GM12878 (cell line): ENCODE measurements at regions of chr4 and their contacts with region 1.

Region 1: DNA sequence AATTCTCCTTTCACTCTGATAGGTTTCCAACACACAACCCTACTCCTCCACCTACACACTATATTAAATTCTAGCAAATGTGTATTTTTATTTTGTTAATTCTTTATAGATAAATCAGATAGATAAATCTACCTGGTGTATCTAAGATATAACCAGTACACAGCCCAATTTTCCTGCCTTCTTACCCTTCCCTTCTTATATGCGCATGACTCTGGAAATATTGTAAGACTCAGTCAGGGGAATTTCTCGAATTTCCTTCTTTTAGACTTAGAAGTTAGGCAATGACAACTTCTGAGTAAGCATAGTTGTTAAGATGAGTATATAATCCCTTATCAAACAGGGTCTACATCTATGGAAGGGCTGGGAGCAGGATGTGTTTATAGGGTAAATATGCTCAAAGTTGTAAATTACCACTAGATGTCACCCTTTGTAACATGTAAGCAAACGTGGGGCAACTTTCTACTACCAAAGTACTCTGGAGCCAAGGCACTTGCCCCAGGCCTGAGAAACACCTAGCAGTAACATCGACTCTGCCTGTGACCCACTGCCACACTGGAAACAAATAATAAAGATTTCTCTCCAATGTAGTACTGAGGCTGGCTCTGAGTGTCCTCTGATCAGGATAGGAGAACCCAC is 444.7 kb downstream of the IQCM start:
- DNase-seq: no peak
- ATAC-seq: peak; percentile 92
- H3K4me3 ChIP-seq: no peak overlapping the region
- H3K27ac ChIP-seq: no peak overlapping the region
- H3K4me1 ChIP-seq: no peaks in the 10 kb centered on the region
- H3K27me3 ChIP-seq: no peaks in the 10 kb centered on the region
- CTCF ChIP-seq: peak; percentile 25 to 58 (median 39); a peak in 4 of 6 replicates
- EP300 ChIP-seq: no peak
- POLR2A ChIP-seq: no peak
- RAD21 ChIP-seq: peak; percentile 45

Region 2: GRCh38 chr4:148926276-148927260 is 444.3 kb before region 1 on chr4:
- CTCF ChIA-PET with region 1: no interaction called
- POLR2A ChIA-PET with region 1: no interaction called
- RAD21 ChIA-PET with region 1: no interaction called
- SMC1A ChIA-PET with region 1: no interaction called
- in situ Hi-C with region 1: no loop called
- intact Hi-C with region 1: no loop called
- DNase-seq: no peak
- ATAC-seq: no peak
- H3K4me3 ChIP-seq: no peak overlapping the region
- H3K27ac ChIP-seq: no peak overlapping the region
- H3K4me1 ChIP-seq: no peaks in the 10 kb centered on the region
- H3K27me3 ChIP-seq: no peaks in the 10 kb centered on the region
- CTCF ChIP-seq: no peak
- EP300 ChIP-seq: no peak
- POLR2A ChIP-seq: no peak
- RAD21 ChIP-seq: no peak

Region 3: DNA sequence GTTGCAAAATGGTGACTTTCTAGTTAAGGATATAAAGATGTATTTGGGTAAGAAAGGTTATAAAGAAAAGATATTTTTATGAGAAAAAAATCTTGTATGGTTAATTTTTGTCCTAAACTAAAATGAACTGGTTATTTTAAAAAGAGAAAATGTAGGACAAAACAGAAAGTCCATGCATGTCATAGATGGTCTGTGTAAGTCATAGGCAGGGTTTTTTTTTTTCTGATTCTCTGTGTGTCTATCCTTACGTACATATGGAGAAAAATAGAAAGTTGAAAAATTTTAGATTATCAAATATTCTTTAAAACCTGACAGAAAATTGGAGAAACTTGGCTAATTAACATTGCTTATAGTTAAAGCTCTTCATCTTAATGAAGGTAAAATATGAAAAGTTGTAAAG is 48.7 kb before region 1 on chr4:
- CTCF ChIA-PET with region 1: no interaction called
- POLR2A ChIA-PET with region 1: no interaction called
- RAD21 ChIA-PET with region 1: no interaction called
- SMC1A ChIA-PET with region 1: no interaction called
- in situ Hi-C with region 1: no loop called
- intact Hi-C with region 1: no loop called
- DNase-seq: no peak
- ATAC-seq: no peak
- H3K4me3 ChIP-seq: no peak overlapping the region
- H3K27ac ChIP-seq: no peak overlapping the region
- H3K4me1 ChIP-seq: no peaks in the 10 kb centered on the region
- H3K27me3 ChIP-seq: no peaks in the 10 kb centered on the region
- CTCF ChIP-seq: no peak
- EP300 ChIP-seq: no peak
- POLR2A ChIP-seq: no peak
- RAD21 ChIP-seq: no peak

Region 4: DNA sequence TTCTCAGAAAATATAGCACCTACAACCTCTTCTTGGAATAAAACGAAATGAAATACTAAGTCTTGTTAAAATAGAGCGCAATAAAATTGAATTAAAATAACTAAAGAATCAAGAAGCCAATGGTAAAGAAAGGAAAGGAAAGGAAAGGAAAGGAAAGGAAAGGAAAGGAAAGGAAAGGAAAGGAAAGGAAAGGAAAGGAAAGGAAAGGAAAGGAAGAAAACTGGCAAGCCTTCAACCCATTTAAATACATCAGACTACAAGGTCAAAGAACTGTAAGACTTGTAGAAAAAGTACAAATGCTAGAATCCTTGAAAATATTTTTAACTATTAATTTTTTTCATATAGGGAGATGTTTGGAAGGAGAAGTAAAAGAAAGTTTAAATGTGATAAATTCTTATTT is 72.6 kb after region 1 on chr4:
- CTCF ChIA-PET with region 1: no interaction called
- POLR2A ChIA-PET with region 1: no interaction called
- RAD21 ChIA-PET with region 1: no interaction called
- SMC1A ChIA-PET with region 1: no interaction called
- in situ Hi-C with region 1: no loop called
- intact Hi-C with region 1: no loop called
- DNase-seq: no peak
- ATAC-seq: no peak
- H3K4me3 ChIP-seq: no peak overlapping the region
- H3K27ac ChIP-seq: no peak overlapping the region
- H3K4me1 ChIP-seq: no peaks in the 10 kb centered on the region
- H3K27me3 ChIP-seq: no peaks in the 10 kb centered on the region
- CTCF ChIP-seq: no peak
- EP300 ChIP-seq: no peak
- POLR2A ChIP-seq: no peak
- RAD21 ChIP-seq: no peak

Region 5: GRCh38 chr4:149891426-149891825 is 520.5 kb after region 1 on chr4:
- CTCF ChIA-PET with region 1: interaction called, 9 read pairs
- POLR2A ChIA-PET with region 1: no interaction called
- RAD21 ChIA-PET with region 1: no interaction called
- SMC1A ChIA-PET with region 1: no interaction called
- in situ Hi-C with region 1: loop called (anchors 5 kb)
- intact Hi-C with region 1: loop called (anchors 2 kb)
- DNase-seq: no peak
- ATAC-seq: no peak
- H3K4me3 ChIP-seq: no peak overlapping the region
- H3K27ac ChIP-seq: no peak overlapping the region
- H3K4me1 ChIP-seq: no peaks in the 10 kb centered on the region
- H3K27me3 ChIP-seq: no peaks in the 10 kb centered on the region
- CTCF ChIP-seq: no peak
- EP300 ChIP-seq: no peak
- POLR2A ChIP-seq: no peak
- RAD21 ChIP-seq: no peak

Region 6: DNA sequence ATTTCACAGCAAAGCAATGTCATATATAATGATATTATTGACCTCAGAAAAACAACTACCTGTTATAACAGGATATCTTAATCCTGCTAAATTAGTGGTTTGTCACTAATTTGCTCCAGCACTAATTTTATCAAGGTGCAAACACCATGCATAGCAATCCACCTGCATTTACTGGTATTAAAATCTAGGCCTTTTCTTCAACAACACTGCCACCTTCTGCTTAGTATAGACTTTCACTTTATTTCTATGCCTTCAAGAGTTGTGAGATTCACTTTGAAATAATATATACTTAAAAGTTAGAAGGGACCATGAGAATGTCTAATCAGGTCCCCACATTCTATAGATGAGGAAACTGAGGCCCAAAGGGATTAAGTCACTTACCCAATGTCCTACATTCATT is 526.9 kb after region 1 on chr4:
- CTCF ChIA-PET with region 1: interaction called, 9 read pairs
- POLR2A ChIA-PET with region 1: no interaction called
- RAD21 ChIA-PET with region 1: interaction called, 5 read pairs
- SMC1A ChIA-PET with region 1: interaction called, 5 read pairs
- in situ Hi-C with region 1: loop called (anchors 5 kb)
- intact Hi-C with region 1: loop called (anchors 2 kb)
- DNase-seq: no peak
- ATAC-seq: peak; percentile 58
- H3K4me3 ChIP-seq: no peak overlapping the region
- H3K27ac ChIP-seq: no peak overlapping the region
- H3K4me1 ChIP-seq: no peaks in the 10 kb centered on the region
- H3K27me3 ChIP-seq: no peaks in the 10 kb centered on the region
- CTCF ChIP-seq: peak; percentile 2 to 39 (median 11); a peak in 2 of 6 replicates
- EP300 ChIP-seq: no peak
- POLR2A ChIP-seq: no peak
- RAD21 ChIP-seq: peak; percentile 53